ENCODE measurements at regions of chr18 and their contacts with region 1.

Region 1: DNA sequence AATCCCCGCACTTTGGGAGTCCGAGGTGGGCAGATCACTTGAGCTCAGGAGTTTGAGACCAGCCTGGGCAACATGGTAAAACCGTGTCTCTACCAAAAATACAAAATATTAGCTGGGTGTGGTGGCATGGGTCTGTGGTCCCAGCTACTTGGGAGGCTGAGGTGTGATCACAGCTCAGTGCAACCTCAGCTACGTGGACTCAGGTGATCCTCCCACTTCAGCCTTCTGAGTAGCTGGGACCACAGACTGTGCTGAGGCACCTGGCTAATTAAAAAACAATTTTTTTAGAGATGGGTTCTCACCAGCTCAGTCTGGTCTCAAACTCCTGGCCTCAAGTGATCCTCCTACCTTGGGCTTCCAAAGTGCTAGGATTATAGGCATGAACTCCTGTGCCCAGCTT is 23.4 kb downstream of the ANKRD12 start:
- DNase-seq: no peak
- CTCF ChIP-seq: no peak

Region 2: DNA sequence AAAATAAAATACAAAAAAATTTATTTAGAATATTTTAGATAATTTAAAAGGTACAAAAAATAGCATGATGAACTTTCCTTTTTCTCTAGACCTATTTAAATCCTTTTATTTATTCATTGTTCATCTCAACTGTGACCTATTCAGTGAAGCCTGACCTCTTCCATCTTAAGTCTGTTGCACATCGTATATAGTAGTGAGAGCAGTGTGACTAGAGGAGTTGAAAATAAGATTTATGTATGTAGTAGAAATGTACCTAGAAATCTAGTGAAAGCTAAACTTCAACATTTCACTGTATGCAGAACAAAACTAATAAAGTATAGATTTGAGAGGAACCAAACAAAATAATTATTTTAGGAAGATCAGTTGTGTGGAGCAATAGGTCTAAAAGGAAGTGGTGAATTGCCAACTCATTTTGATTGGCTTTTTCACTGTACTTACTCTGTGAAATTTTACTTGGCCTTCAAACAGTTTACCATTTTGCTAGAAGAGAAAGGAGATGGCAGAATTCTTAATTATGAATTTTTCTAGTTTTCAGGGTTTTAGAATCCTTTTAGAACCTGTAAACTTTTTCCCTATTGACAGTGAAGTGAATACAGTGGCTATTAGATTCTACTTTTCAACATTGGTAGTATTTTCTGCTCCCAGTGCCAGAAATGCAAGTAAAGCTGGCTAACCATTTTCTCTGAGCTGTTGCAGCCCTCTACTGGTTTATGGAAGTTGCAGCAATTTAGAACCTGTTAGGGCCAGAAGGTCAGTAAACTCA is 12.4 kb before region 1 on chr18:
- CTCF ChIA-PET with region 1: interaction called, 11 read pairs
- POLR2A ChIA-PET with region 1: no interaction called
- DNase-seq: peak; percentile 33
- CTCF ChIP-seq: peak; percentile 79